MCF 10A (cell line): ENCODE measurements at regions of chr14 and their contacts with region 1.

Region 1: DNA sequence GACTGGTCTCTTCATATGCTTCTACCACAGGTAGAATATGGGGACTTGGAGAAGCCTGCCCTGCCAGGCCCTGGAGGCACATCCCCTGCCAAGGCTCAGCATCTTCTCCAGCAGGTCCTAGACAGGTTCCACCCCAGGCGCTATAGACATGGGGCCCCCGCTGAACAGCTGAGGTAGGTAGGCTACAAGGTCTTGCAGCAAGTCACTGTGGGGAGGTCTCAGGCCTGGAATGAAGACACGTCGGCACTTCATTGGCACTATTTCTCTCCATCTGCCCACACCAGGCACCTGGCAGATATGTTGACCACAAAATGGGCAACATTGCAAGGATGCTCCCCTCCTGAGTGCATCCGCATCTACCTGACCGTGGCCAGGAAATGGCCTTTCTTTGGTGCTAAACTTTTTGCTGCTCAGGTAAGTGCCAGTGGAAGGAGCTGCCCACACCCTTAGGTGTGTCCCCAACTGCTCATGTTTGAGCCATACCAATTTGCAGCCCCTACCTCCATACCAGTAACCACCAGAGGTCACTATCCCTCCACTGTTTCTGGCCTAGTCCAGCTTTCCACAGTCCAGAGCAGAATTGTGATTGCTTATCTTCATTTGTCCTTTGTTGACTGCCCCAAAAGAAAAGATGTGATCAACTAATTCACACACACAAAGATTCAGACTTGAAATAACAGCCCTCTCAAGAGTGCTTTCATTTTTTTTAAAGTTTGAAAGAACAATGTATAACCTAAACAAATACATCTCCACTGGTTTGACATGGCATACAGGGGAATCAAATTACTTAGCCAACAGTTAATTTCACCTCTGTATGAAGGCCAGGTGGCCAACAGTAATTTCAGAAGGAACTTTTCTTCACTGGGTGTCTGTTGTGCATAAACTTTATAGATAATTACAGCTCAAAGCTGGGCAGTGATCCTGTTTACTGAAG is 16.1 kb downstream of the PIGH start:
- DNase-seq: peak; percentile 66
- H3K4me3 Mint-ChIP-seq: no peak overlapping the region
- H3K27ac Mint-ChIP-seq: no peak overlapping the region
- H3K4me1 Mint-ChIP-seq: no peaks in the 10 kb centered on the region
- H3K27me3 Mint-ChIP-seq: no peaks in the 10 kb centered on the region
- CTCF ChIP-seq: peak; percentile 65

Region 2: GRCh38 chr14:67564236-67564635 is 19.7 kb before region 1 on chr14:
- CTCF ChIA-PET with region 1: interaction called, 12 read pairs
- POLR2A ChIA-PET with region 1: no interaction called
- intact Hi-C with region 1: no loop called
- DNase-seq: peak; percentile 40
- H3K4me3 Mint-ChIP-seq: no peak overlapping the region
- H3K27ac Mint-ChIP-seq: no peak overlapping the region
- H3K4me1 Mint-ChIP-seq: peaks cover 12% of the 10 kb centered on the region
- H3K27me3 Mint-ChIP-seq: no peaks in the 10 kb centered on the region
- CTCF ChIP-seq: no peak

Region 3: GRCh38 chr14:67666750-67667449 is 82.9 kb after region 1 on chr14:
- CTCF ChIA-PET with region 1: interaction called, 49 read pairs
- POLR2A ChIA-PET with region 1: interaction called, 10 read pairs
- intact Hi-C with region 1: loop called (anchors 1 kb)
- DNase-seq: peak; percentile 72
- H3K4me3 Mint-ChIP-seq: no peak overlapping the region
- H3K27ac Mint-ChIP-seq: peak overlapping the region; percentile 27
- H3K4me1 Mint-ChIP-seq: peaks cover 17% of the 10 kb centered on the region
- H3K27me3 Mint-ChIP-seq: no peaks in the 10 kb centered on the region
- CTCF ChIP-seq: peak; percentile 73